ENCODE measurements at regions of chr19 and their contacts with region 1.

Region 1: GRCh38 chr19:40598121-40598917 is 2.9 kb upstream of the LTBP4 start:
- DNase-seq: peak in 1 of 2 donors; percentile 94
- H3K4me3 ChIP-seq: peak overlapping the region; percentile 13 to 57
- H3K27ac ChIP-seq: peak overlapping the region in 1 of 2 donors; percentile 88
- H3K4me1 ChIP-seq: peaks cover 22 to 52% of the 10 kb centered on the region in 2 donors
- H3K27me3 ChIP-seq: no peaks in the 10 kb centered on the region
- CTCF ChIP-seq: peak; percentile 97 to 99 (median 97)

Region 2: GRCh38 chr19:40305403-40305802 is 292.9 kb before region 1 on chr19:
- intact Hi-C with region 1: loop called (anchors 10 kb)
- DNase-seq: peak in 1 of 2 donors; percentile 74
- H3K4me3 ChIP-seq: no peak overlapping the region
- H3K27ac ChIP-seq: no peak overlapping the region
- H3K4me1 ChIP-seq: no peaks in the 10 kb centered on the region
- H3K27me3 ChIP-seq: no peaks in the 10 kb centered on the region
- CTCF ChIP-seq: peak; percentile 61 to 77 (median 67)

Region 3: GRCh38 chr19:40403262-40403984 is 194.9 kb before region 1 on chr19:
- intact Hi-C with region 1: loop called (anchors 5 kb)
- DNase-seq: peak; percentile 63 to 95
- H3K4me3 ChIP-seq: peak overlapping the region; percentile 50 to 67
- H3K27ac ChIP-seq: peak overlapping the region; percentile 67 to 79
- H3K4me1 ChIP-seq: peaks cover 3 to 4% of the 10 kb centered on the region in 2 donors
- H3K27me3 ChIP-seq: no peaks in the 10 kb centered on the region
- CTCF ChIP-seq: peak in 1 of 3 experiments; percentile 13

Region 4: DNA sequence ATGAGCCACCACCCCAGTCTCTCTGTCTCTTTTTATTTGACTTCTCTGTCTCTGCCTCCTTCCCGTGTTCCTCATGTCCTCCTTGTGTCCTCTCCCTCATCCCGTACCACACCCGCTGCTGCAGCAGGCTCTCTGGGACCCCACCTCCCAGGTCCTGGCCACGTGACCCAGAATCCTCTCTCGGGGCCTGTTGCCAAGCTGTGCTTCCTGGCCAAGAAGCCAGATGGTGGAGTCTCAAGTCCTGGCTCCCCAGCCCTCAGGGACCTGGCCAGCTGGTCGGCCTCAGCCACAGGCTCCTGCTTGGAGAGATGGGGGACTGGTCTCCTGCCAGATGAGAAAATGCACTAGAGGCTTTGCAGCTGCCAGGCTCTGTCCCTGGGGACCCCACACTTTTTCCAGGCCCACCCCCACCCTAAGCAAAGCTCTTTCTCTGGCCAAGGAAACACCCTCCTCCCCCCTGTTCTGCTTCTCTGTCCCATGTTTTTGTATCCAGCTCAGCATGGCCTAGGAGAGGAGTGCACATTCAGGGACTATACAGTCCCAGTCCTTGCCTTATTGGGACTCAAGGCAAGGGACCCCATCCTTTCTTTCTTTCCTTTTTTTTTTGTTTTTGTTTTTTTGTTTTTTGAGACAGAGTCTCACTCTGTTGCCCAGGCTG is 56.0 kb before region 1 on chr19:
- intact Hi-C with region 1: loop called (anchors 1 kb)
- DNase-seq: peak in 1 of 2 donors; percentile 76
- H3K4me3 ChIP-seq: no peak overlapping the region
- H3K27ac ChIP-seq: peak overlapping the region; percentile 63 to 72
- H3K4me1 ChIP-seq: peaks cover 0 to 7% of the 10 kb centered on the region in 2 donors
- H3K27me3 ChIP-seq: no peaks in the 10 kb centered on the region
- CTCF ChIP-seq: no peak

Region 5: GRCh38 chr19:40570313-40571004 is 27.9 kb before region 1 on chr19:
- intact Hi-C with region 1: loop called (anchors 1 kb)
- DNase-seq: peak; percentile 96 to 99
- H3K4me3 ChIP-seq: peak overlapping the region; percentile 53 to 62
- H3K27ac ChIP-seq: peak overlapping the region; percentile 59 to 70
- H3K4me1 ChIP-seq: peaks cover 2 to 11% of the 10 kb centered on the region in 2 donors
- H3K27me3 ChIP-seq: peaks cover 20% of the 10 kb centered on the region
- CTCF ChIP-seq: no peak